GM12878 (cell line): ENCODE measurements at regions of chr5 and their contacts with region 1.

Region 1: DNA sequence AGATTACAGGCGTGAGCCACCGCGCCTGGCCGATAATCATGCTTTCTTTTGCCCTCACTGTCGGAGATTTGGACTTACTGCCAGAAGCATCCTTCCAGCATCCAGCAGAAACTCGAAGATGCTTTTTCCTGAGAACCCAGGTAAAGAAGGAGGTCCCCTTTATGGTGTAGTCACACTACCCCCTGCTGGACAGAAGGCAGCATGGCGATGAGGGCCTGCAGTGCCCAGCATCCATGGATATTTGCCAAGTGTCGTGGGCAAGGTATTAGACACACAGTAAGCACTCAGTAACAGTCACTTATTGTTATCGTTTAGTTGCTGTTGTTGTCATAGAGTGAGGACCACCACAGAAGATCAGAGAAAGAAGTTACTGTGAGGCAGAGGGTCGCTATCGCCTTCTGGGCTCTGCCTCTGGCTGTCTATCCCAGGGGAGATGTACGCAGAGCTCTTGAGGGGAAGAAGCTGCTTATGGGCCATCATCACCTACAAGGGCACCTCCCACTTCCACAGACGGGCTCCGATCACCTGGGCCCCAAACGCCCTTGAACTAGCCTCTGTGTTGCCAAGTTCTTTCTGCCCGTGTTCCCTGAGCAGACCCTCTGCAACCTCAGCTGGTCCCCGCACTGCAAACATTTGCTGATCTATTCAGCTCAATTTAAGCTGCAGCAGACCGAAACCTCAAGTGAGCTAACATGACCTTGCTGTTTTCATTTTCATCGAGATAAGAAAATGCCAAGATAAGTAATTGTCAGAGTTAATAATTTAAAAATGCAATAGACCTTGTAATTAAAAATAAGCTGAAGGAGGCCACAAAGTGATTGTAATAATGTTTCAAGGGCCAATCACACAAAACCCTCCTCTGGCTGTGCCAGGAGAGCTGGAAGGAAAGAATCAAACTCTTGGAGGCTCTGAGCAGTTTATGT is 23.9 kb downstream of the C5orf15 start:
- DNase-seq: no peak
- ATAC-seq: peak; percentile 94
- H3K4me3 ChIP-seq: no peak overlapping the region
- H3K27ac ChIP-seq: no peak overlapping the region
- H3K4me1 ChIP-seq: peaks cover 3% of the 10 kb centered on the region
- H3K27me3 ChIP-seq: no peaks in the 10 kb centered on the region
- CTCF ChIP-seq: peak; percentile 74 to 84 (median 75)
- EP300 ChIP-seq: no peak
- POLR2A ChIP-seq: no peak
- RAD21 ChIP-seq: peak; percentile 92

Region 2: GRCh38 chr5:133423618-133424282 is 520.8 kb before region 1 on chr5:
- CTCF ChIA-PET with region 1: interaction called, 51 read pairs
- POLR2A ChIA-PET with region 1: no interaction called
- RAD21 ChIA-PET with region 1: interaction called, 14 read pairs
- SMC1A ChIA-PET with region 1: interaction called, 7 read pairs
- in situ Hi-C with region 1: loop called (anchors 5 kb)
- intact Hi-C with region 1: loop called (anchors 1 kb)
- DNase-seq: peak; percentile 16
- ATAC-seq: peak; percentile 92
- H3K4me3 ChIP-seq: no peak overlapping the region
- H3K27ac ChIP-seq: no peak overlapping the region
- H3K4me1 ChIP-seq: 0 out of 2 replicates have a peak, but pooled peaks cover 4% of the 10 kb centered on the region
- H3K27me3 ChIP-seq: peaks cover 3% of the 10 kb centered on the region in 2 experiments; a peak in 1 of 4 replicates
- CTCF ChIP-seq: peak; percentile 87 to 93 (median 91)
- EP300 ChIP-seq: no peak
- POLR2A ChIP-seq: no peak
- RAD21 ChIP-seq: peak; percentile 65

Region 3: GRCh38 chr5:133489632-133490031 is 454.9 kb before region 1 on chr5:
- CTCF ChIA-PET with region 1: interaction called, 10 read pairs
- POLR2A ChIA-PET with region 1: no interaction called
- RAD21 ChIA-PET with region 1: interaction called, 4 read pairs
- SMC1A ChIA-PET with region 1: no interaction called
- in situ Hi-C with region 1: no loop called
- intact Hi-C with region 1: no loop called
- DNase-seq: no peak
- ATAC-seq: peak; percentile 96
- H3K4me3 ChIP-seq: no peak overlapping the region
- H3K27ac ChIP-seq: no peak overlapping the region
- H3K4me1 ChIP-seq: no peaks in the 10 kb centered on the region
- H3K27me3 ChIP-seq: no peaks in the 10 kb centered on the region; a peak in 2 of 4 replicates
- CTCF ChIP-seq: peak; percentile 26 to 50 (median 28); a peak in 4 of 6 replicates
- EP300 ChIP-seq: no peak
- POLR2A ChIP-seq: no peak
- RAD21 ChIP-seq: peak; percentile 68

Region 4: GRCh38 chr5:133552931-133553525 is 391.5 kb before region 1 on chr5:
- CTCF ChIA-PET with region 1: interaction called, 12 read pairs
- POLR2A ChIA-PET with region 1: no interaction called
- RAD21 ChIA-PET with region 1: interaction called, 5 read pairs
- SMC1A ChIA-PET with region 1: interaction called, 7 read pairs
- in situ Hi-C with region 1: loop called (anchors 10 kb)
- intact Hi-C with region 1: loop called (anchors 1 kb)
- DNase-seq: no peak
- ATAC-seq: peak; percentile 98
- H3K4me3 ChIP-seq: no peak overlapping the region
- H3K27ac ChIP-seq: no peak overlapping the region
- H3K4me1 ChIP-seq: no peaks in the 10 kb centered on the region
- H3K27me3 ChIP-seq: no peaks in the 10 kb centered on the region; a peak in 3 of 4 replicates
- CTCF ChIP-seq: peak; percentile 76 to 83 (median 82)
- EP300 ChIP-seq: no peak
- POLR2A ChIP-seq: no peak
- RAD21 ChIP-seq: peak; percentile 56

Region 5: DNA sequence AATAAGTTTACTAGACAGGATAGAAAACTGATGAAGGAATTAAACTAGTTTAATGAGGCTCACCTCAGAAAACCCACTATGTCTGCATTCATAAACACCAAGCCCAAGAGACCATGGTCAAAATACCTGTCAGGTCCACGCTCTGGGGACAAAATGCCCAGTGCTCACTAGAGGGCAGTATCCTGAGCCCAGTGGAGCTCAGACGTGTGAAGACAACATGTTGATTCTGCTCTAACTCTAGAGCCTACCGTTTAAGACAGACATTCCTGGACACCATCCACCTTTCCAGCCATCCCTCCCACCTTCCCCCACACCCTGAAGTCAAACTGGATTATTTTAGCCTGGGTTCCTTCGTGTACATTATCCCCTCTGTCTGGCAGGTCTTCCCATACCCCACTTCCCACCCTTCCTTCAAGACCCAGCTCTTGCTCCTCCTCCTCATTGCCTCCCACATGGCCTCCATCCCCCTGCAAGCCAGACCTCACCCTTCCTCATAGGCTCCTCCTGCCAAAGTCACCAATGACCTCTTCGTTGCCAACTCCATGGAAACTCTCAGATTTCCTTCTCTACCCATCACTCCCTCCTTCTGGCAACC is 189.9 kb before region 1 on chr5:
- CTCF ChIA-PET with region 1: interaction called, 11 read pairs
- POLR2A ChIA-PET with region 1: no interaction called
- RAD21 ChIA-PET with region 1: interaction called, 3 read pairs
- SMC1A ChIA-PET with region 1: interaction called, 8 read pairs
- in situ Hi-C with region 1: no loop called
- intact Hi-C with region 1: loop called (anchors 5 kb)
- DNase-seq: peak; percentile 11
- ATAC-seq: peak; percentile 96
- H3K4me3 ChIP-seq: no peak overlapping the region
- H3K27ac ChIP-seq: no peak overlapping the region
- H3K4me1 ChIP-seq: no peaks in the 10 kb centered on the region
- H3K27me3 ChIP-seq: no peaks in the 10 kb centered on the region; a peak in 3 of 4 replicates
- CTCF ChIP-seq: peak; percentile 63 to 68 (median 65)
- EP300 ChIP-seq: no peak
- POLR2A ChIP-seq: no peak
- RAD21 ChIP-seq: peak; percentile 58

Region 6: GRCh38 chr5:133801955-133802751 is 142.4 kb before region 1 on chr5:
- CTCF ChIA-PET with region 1: no interaction called
- POLR2A ChIA-PET with region 1: no interaction called
- RAD21 ChIA-PET with region 1: no interaction called
- SMC1A ChIA-PET with region 1: no interaction called
- in situ Hi-C with region 1: no loop called
- intact Hi-C with region 1: no loop called
- DNase-seq: no peak
- ATAC-seq: no peak
- H3K4me3 ChIP-seq: no peak overlapping the region
- H3K27ac ChIP-seq: no peak overlapping the region
- H3K4me1 ChIP-seq: no peaks in the 10 kb centered on the region
- H3K27me3 ChIP-seq: peaks cover 0 to 8% of the 10 kb centered on the region in 2 experiments; a peak in 2 of 4 replicates
- CTCF ChIP-seq: no peak
- EP300 ChIP-seq: no peak
- POLR2A ChIP-seq: no peak
- RAD21 ChIP-seq: no peak

Region 7: DNA sequence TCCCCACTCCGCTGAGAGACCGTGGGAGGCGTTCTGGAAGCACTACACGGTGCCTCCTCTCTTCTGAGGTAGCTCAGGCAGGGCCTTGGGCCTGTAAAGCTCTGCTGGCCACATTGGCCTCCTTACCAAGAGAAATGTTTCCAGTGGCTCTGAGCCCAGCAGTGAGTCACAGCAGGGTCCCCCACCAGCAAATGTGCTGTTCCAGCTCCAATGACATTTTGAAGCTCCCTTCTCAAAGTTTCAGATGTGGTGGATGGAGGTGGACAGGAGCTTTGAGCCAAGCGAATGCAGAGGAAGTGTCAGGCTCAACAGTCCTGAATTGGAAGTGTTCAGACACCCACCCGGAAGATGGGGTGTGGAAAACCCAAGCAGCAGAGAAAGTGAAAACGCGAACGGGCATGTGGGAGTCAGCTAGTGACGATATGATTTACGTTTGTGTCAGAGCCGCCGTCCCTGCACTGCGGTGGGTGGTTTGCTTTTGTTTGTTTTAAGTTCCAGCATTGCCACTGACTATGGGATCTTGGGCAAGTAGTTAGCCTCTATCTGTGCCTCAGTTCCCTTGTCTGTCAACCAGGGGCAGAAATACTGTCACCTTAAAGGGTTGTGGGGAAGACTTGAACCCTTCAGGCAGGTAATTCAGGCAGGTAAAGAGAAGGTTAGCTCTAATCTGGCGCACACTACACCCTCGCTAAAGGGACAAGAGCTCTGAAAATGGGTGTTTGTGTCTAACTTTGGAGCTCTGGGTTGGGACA is 14.3 kb before region 1 on chr5:
- CTCF ChIA-PET with region 1: interaction called, 24 read pairs
- POLR2A ChIA-PET with region 1: no interaction called
- RAD21 ChIA-PET with region 1: interaction called, 8 read pairs
- SMC1A ChIA-PET with region 1: interaction called, 30 read pairs
- in situ Hi-C with region 1: no loop called
- intact Hi-C with region 1: no loop called
- DNase-seq: no peak
- ATAC-seq: peak; percentile 42
- H3K4me3 ChIP-seq: peak overlapping the region; percentile 38; the same call in 1 of the 2 replicates
- H3K27ac ChIP-seq: peak overlapping the region; percentile 52
- H3K4me1 ChIP-seq: peaks cover 60% of the 10 kb centered on the region
- H3K27me3 ChIP-seq: no peaks in the 10 kb centered on the region
- CTCF ChIP-seq: no peak
- EP300 ChIP-seq: peak in 1 of 2 experiments; percentile 12; a peak in 1 of 4 replicates
- POLR2A ChIP-seq: peak; percentile 62
- RAD21 ChIP-seq: no peak